ENCODE measurements at regions of chr6 and their contacts with region 1.

Region 1: DNA sequence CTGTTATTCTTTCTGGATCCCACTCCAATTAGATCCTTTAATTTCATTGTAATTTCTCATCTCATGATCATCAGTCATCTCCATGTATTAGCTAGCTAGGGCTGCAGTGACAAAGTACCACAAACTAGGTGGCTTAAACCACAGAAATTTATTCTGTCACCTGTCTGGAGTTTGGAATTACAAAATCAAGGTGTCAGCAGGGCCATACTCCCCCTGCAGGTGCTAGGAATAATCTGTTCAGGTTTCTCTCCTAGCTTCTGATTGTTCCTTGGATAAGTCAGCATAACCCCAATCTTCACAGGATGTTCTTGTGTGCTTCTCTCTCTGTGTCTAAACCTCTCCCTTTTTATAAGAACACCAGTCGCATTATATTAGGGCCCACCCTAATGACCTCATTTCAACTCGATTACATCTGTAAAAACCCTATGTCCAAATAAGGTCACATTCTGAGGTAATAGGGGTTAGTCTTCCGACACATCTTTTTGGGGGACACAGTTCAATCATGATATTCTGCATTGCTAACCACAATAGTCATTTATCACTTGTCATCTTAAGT is 40.5 kb downstream of the BEND6 start:
- DNase-seq: peak in 1 of 2 experiments; percentile 18
- H3K4me3 ChIP-seq: no peak overlapping the region
- H3K4me3 Mint-ChIP-seq: no peak overlapping the region
- H3K27ac Mint-ChIP-seq: no peak overlapping the region
- H3K4me1 ChIP-seq: no peaks in the 10 kb centered on the region
- H3K4me1 Mint-ChIP-seq: no peaks in the 10 kb centered on the region
- H3K27me3 ChIP-seq: no peaks in the 10 kb centered on the region
- H3K27me3 Mint-ChIP-seq: peaks cover 9% of the 10 kb centered on the region
- CTCF ChIP-seq: peak; percentile 49 to 55

Region 2: GRCh38 chr6:56902641-56903464 is 92.6 kb before region 1 on chr6:
- CTCF ChIA-PET with region 1: interaction called, 5 read pairs
- POLR2A ChIA-PET with region 1: no interaction called
- intact Hi-C with region 1: loop called (anchors 1 kb)
- DNase-seq: peak in 1 of 2 experiments; percentile 13
- H3K4me3 ChIP-seq: no peak overlapping the region
- H3K4me3 Mint-ChIP-seq: peak overlapping the region; percentile 0
- H3K27ac Mint-ChIP-seq: no peak overlapping the region
- H3K4me1 ChIP-seq: 0 out of 2 replicates have a peak, but pooled peaks cover 6% of the 10 kb centered on the region
- H3K4me1 Mint-ChIP-seq: peaks cover 22% of the 10 kb centered on the region
- H3K27me3 ChIP-seq: no peaks in the 10 kb centered on the region
- H3K27me3 Mint-ChIP-seq: peaks cover 2% of the 10 kb centered on the region
- CTCF ChIP-seq: peak; percentile 67

Region 3: DNA sequence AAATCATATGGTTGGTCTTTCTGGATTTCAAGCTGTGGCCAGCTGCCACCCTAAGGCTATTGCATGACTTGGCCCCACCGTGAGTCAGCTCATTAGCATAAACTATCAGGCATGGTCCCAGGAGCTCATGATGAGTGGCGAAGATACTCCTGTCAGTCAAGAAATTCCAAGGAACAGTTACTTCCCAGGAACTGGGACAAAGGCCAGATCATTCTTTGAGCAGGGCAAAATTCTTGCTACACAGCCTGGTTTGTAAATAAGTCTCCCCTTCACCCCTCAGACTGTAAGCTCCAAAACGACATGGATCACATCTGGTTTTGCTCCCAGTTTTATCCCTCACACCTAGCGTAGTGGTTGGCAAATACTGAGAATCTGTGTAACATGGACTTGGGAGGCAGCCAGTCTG is 18.1 kb after region 1 on chr6:
- CTCF ChIA-PET with region 1: interaction called, 11 read pairs
- POLR2A ChIA-PET with region 1: no interaction called
- intact Hi-C with region 1: no loop called
- DNase-seq: no peak
- H3K4me3 ChIP-seq: no peak overlapping the region
- H3K4me3 Mint-ChIP-seq: no peak overlapping the region
- H3K27ac Mint-ChIP-seq: no peak overlapping the region
- H3K4me1 ChIP-seq: no peaks in the 10 kb centered on the region
- H3K4me1 Mint-ChIP-seq: no peaks in the 10 kb centered on the region
- H3K27me3 ChIP-seq: no peaks in the 10 kb centered on the region
- H3K27me3 Mint-ChIP-seq: no peaks in the 10 kb centered on the region
- CTCF ChIP-seq: no peak

Region 4: GRCh38 chr6:57024321-57024720 is 28.9 kb after region 1 on chr6:
- CTCF ChIA-PET with region 1: no interaction called
- POLR2A ChIA-PET with region 1: no interaction called
- intact Hi-C with region 1: no loop called
- DNase-seq: no peak
- H3K4me3 ChIP-seq: no peak overlapping the region
- H3K4me3 Mint-ChIP-seq: no peak overlapping the region
- H3K27ac Mint-ChIP-seq: no peak overlapping the region
- H3K4me1 ChIP-seq: peaks cover 8% of the 10 kb centered on the region; the same call in 1 of the 2 replicates
- H3K4me1 Mint-ChIP-seq: peaks cover 12% of the 10 kb centered on the region
- H3K27me3 ChIP-seq: no peaks in the 10 kb centered on the region
- H3K27me3 Mint-ChIP-seq: peaks cover 8% of the 10 kb centered on the region
- CTCF ChIP-seq: no peak

Measured in Caco-2 (cell line).